ENCODE measurements at regions of chr1 and their contacts with region 1.

Region 1: GRCh38 chr1:160675641-160676410 is 29.0 kb upstream of the SLAMF1 start:
- DNase-seq: peak; percentile 49 to 85 (median 80)
- ATAC-seq: peak; percentile 79
- H3K4me3 ChIP-seq: no peak overlapping the region
- H3K4me3 Mint-ChIP-seq: no peak overlapping the region
- H3K27ac ChIP-seq: peak overlapping the region in 1 of 2 experiments; percentile 47
- H3K27ac Mint-ChIP-seq: peak overlapping the region; percentile 84
- H3K4me1 ChIP-seq: peaks cover 45% of the 10 kb centered on the region
- H3K4me1 Mint-ChIP-seq: peaks cover 16% of the 10 kb centered on the region
- H3K27me3 ChIP-seq: no peaks in the 10 kb centered on the region
- H3K27me3 Mint-ChIP-seq: no peaks in the 10 kb centered on the region
- CTCF ChIP-seq: peak; percentile 76

Region 2: GRCh38 chr1:160629286-160630210 is 46.3 kb before region 1 on chr1:
- CTCF ChIA-PET with region 1: interaction called, 75 read pairs
- POLR2A ChIA-PET with region 1: interaction called, 7 read pairs
- intact Hi-C with region 1: loop called in 1 of 2 experiments (anchors 2 kb)
- DNase-seq: peak; percentile 53 to 92 (median 75)
- ATAC-seq: peak; percentile 81
- H3K4me3 ChIP-seq: peak overlapping the region; percentile 19 to 38
- H3K4me3 Mint-ChIP-seq: peak overlapping the region; percentile 76
- H3K27ac ChIP-seq: peak overlapping the region; percentile 91 to 95
- H3K27ac Mint-ChIP-seq: peak overlapping the region; percentile 97
- H3K4me1 ChIP-seq: peaks cover 91% of the 10 kb centered on the region
- H3K4me1 Mint-ChIP-seq: peaks cover 99% of the 10 kb centered on the region
- H3K27me3 ChIP-seq: no peaks in the 10 kb centered on the region
- H3K27me3 Mint-ChIP-seq: no peaks in the 10 kb centered on the region
- CTCF ChIP-seq: no peak

Region 3: GRCh38 chr1:160653620-160654016 is 22.2 kb before region 1 on chr1:
- CTCF ChIA-PET with region 1: interaction called, 12 read pairs
- POLR2A ChIA-PET with region 1: interaction called, 3 read pairs
- intact Hi-C with region 1: loop called in 1 of 2 experiments (anchors 2 kb)
- DNase-seq: no peak
- ATAC-seq: no peak
- H3K4me3 ChIP-seq: no peak overlapping the region
- H3K4me3 Mint-ChIP-seq: no peak overlapping the region
- H3K27ac ChIP-seq: no peak overlapping the region
- H3K27ac Mint-ChIP-seq: no peak overlapping the region
- H3K4me1 ChIP-seq: peaks cover 39% of the 10 kb centered on the region
- H3K4me1 Mint-ChIP-seq: peaks cover 79% of the 10 kb centered on the region
- H3K27me3 ChIP-seq: no peaks in the 10 kb centered on the region
- H3K27me3 Mint-ChIP-seq: no peaks in the 10 kb centered on the region
- CTCF ChIP-seq: no peak

Region 4: GRCh38 chr1:160711602-160712311 is 35.9 kb after region 1 on chr1 and contains the start of gene CD48:
- CTCF ChIA-PET with region 1: interaction called, 87 read pairs
- POLR2A ChIA-PET with region 1: interaction called, 11 read pairs
- intact Hi-C with region 1: loop called in 1 of 2 experiments (anchors 1 kb)
- DNase-seq: peak in 7 of 9 experiments; percentile 37 to 89 (median 67)
- ATAC-seq: peak; percentile 32
- H3K4me3 ChIP-seq: peak within 1 kb of the TSS; percentile 84 to 89
- H3K4me3 Mint-ChIP-seq: no peak within 1 kb of the TSS
- H3K27ac ChIP-seq: peak within 1 kb of the TSS; percentile 76 to 93
- H3K27ac Mint-ChIP-seq: no peak within 1 kb of the TSS
- H3K4me1 ChIP-seq: peaks cover 58% of the 10 kb centered on the region
- H3K4me1 Mint-ChIP-seq: peaks cover 46% of the 10 kb centered on the region
- H3K27me3 ChIP-seq: no peaks in the 10 kb centered on the region
- H3K27me3 Mint-ChIP-seq: no peaks in the 10 kb centered on the region
- CTCF ChIP-seq: no peak
- total RNA-seq, gene CD48: 397 to 399 TPM

Region 5: GRCh38 chr1:160830321-160831153 is 154.7 kb after region 1 on chr1:
- CTCF ChIA-PET with region 1: interaction called, 13 read pairs
- POLR2A ChIA-PET with region 1: no interaction called
- intact Hi-C with region 1: loop called (anchors 1 kb)
- DNase-seq: peak; percentile 52 to 87 (median 80)
- ATAC-seq: peak; percentile 70
- H3K4me3 ChIP-seq: no peak overlapping the region
- H3K4me3 Mint-ChIP-seq: no peak overlapping the region
- H3K27ac ChIP-seq: peak overlapping the region in 1 of 2 experiments; percentile 15
- H3K27ac Mint-ChIP-seq: peak overlapping the region; percentile 86
- H3K4me1 ChIP-seq: peaks cover 25% of the 10 kb centered on the region
- H3K4me1 Mint-ChIP-seq: peaks cover 58% of the 10 kb centered on the region
- H3K27me3 ChIP-seq: no peaks in the 10 kb centered on the region
- H3K27me3 Mint-ChIP-seq: no peaks in the 10 kb centered on the region
- CTCF ChIP-seq: peak; percentile 73